Motor neuron (in vitro differentiated cells): ENCODE measurements at regions of chr11 and their contacts with region 1.

Region 1: DNA sequence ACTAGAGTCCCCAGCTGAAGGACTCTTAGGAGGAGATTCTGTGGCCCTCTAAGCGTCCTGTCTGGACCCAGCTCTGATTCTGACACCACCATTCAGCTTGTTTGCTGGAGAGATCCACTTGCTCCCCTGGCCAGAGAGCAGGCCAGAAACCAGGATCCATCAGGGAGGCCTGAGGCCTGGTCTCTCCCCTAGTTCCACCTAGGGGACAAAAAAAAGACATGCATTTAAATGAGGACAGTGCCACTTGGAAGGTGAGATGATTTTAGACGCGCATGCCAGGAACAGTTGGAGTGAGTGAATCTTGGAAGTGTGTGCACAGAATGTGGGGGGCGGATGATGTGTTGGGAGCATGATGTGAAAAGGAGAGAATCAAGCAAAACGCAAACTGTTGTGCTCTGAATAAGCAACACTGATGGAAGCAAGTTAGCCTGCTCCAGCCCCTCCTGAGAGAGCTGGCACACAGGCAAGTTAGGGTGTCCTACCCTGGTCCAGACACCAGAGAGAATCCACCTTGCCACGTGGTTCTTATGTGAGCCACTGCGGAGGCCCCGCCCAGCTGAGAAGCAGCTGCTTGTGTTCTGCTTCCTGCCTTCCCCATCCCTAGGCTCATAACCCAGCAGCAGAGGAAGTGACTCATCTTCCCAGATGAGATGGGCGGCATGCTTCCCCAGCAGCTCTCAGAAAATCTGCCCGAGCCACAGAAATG is 8.0 kb upstream of the SLCO2B1 start:
- ATAC-seq: peak; percentile 82 to 98 (median 98)
- H3K4me3 ChIP-seq: no peak overlapping the region
- H3K27ac ChIP-seq: peak overlapping the region in 1 of 2 donors; percentile 76
- H3K4me1 ChIP-seq: peaks cover 0 to 9% of the 10 kb centered on the region in 2 donors

Region 2: DNA sequence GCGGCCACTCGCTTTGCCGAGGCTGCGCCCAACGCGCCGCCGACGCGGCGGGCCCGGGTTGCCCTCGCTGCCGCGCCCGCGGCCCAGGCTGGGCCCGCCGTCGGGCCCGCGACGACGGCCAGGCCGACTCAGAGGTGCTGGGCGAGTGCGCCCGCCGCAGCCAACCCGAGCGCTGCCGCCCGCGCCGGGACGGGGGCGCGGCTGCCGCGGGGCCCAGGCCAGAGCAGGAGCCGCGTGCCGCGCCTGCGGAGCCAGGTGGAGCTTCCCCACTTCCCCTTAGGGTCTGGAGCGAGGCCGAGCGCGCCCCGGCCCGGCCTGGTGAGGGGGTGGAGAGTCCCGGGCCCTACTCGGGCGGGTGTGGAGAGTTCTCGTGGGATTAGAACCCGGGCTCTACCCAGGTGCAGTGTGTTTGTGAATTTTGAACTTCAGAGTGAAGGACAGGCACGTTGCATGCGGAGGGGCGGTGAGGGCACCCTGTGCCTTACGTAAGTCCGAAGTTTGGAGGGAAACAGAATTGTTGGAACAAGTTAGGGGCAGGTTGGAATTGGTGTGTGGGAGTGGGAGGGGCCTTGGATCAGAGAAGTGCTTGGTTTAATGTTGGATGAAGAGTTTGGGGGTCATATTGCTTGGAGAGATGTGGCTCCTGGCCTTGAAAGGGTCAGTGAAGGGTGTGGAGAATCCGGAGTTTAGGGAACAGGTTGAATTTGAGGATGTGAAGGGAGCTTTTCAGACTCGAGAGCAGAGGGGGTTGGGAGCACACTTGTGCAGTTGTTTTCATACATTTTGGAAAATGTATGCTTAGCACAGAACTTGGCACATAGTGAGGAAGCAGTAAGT is 393.5 kb before region 1 on chr11:
- in situ Hi-C with region 1: no loop called
- ATAC-seq: peak; percentile 60 to 79 (median 72)
- H3K4me3 ChIP-seq: peak overlapping the region; percentile 62 to 95 (median 83)
- H3K27ac ChIP-seq: peak overlapping the region; percentile 92
- H3K4me1 ChIP-seq: peaks cover 9 to 11% of the 10 kb centered on the region in 2 donors

Region 3: GRCh38 chr11:75204685-75205563 is 62.1 kb after region 1 on chr11:
- in situ Hi-C with region 1: loop called in 1 of 9 experiments (anchors 10 kb)
- ATAC-seq: peak; percentile 65 to 99 (median 86)
- H3K4me3 ChIP-seq: no peak overlapping the region
- H3K27ac ChIP-seq: no peak overlapping the region
- H3K4me1 ChIP-seq: peaks cover 0 to 4% of the 10 kb centered on the region in 2 donors